ENCODE measurements at regions of chr14 and their contacts with region 1.

Region 1: GRCh38 chr14:102694530-102695166 is 82.6 kb upstream of the TRAF3 start:
- DNase-seq: peak; percentile 43
- ATAC-seq: peak; percentile 87
- H3K4me3 ChIP-seq: no peak overlapping the region
- H3K27ac ChIP-seq: no peak overlapping the region; the same call in 1 of the 2 replicates
- H3K4me1 ChIP-seq: peaks cover 15% of the 10 kb centered on the region
- H3K27me3 ChIP-seq: no peaks in the 10 kb centered on the region
- CTCF ChIP-seq: peak; percentile 50 to 71 (median 64); a peak in 5 of 6 replicates
- EP300 ChIP-seq: no peak
- POLR2A ChIP-seq: no peak
- RAD21 ChIP-seq: peak; percentile 85

Region 2: DNA sequence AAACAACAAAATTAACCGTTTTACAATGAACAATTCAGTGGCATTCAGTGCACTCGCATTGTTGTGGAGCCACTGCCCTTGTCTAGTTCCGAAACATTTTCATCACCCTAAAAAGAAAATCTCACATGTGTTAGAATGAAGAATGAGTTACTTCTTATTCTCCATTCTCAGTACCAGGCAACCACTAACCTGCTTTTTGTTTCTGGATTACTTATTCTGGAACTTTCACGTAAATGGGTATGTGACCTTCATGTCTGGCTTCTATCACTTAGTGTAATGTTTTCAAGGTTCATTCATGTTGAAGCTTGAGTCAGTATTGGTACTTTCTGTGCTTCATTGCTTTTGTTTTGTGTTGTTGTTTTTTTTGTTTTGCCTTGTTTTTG is 86.6 kb before region 1 on chr14:
- CTCF ChIA-PET with region 1: interaction called, 29 read pairs
- POLR2A ChIA-PET with region 1: interaction called, 5 read pairs
- RAD21 ChIA-PET with region 1: interaction called, 13 read pairs
- SMC1A ChIA-PET with region 1: interaction called, 10 read pairs
- in situ Hi-C with region 1: no loop called
- intact Hi-C with region 1: no loop called
- DNase-seq: peak; percentile 79
- ATAC-seq: peak; percentile 82
- H3K4me3 ChIP-seq: peak overlapping the region; percentile 46; the same call in 1 of the 2 replicates
- H3K27ac ChIP-seq: peak overlapping the region; percentile 28
- H3K4me1 ChIP-seq: peaks cover 63% of the 10 kb centered on the region
- H3K27me3 ChIP-seq: no peaks in the 10 kb centered on the region
- CTCF ChIP-seq: no peak
- EP300 ChIP-seq: 0 out of 4 replicates have a peak, but pooled peaks of 1 of the 2 experiments have one; percentile 17
- POLR2A ChIP-seq: no peak
- RAD21 ChIP-seq: no peak

Region 3: DNA sequence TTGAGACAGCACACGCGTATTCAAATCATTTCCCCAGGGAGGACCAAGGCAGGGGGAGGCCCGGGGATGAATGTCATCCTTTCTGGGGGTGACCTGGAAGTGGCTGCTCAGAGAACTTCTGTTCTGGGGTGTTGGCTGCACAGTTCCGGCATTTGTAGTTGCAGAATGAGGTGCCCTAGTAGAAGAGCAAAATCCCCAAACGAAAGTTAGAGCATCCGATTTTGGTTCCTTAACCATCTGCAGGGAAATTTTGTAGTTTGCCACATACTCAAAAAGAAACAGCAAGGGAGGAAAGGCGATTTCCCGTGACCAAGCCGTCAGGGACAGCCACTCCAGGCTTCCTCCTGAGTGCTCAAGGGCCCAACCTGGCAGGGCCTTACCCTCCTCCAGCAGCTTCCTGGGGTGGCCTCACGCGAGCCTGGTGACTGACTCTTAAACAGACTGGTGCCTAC is 69.6 kb after region 1 on chr14:
- CTCF ChIA-PET with region 1: interaction called, 47 read pairs
- POLR2A ChIA-PET with region 1: interaction called, 8 read pairs
- RAD21 ChIA-PET with region 1: interaction called, 42 read pairs
- SMC1A ChIA-PET with region 1: interaction called, 29 read pairs
- in situ Hi-C with region 1: no loop called
- intact Hi-C with region 1: no loop called
- DNase-seq: peak; percentile 97
- ATAC-seq: peak; percentile 76
- H3K4me3 ChIP-seq: no peak overlapping the region
- H3K27ac ChIP-seq: peak overlapping the region; percentile 92
- H3K4me1 ChIP-seq: peaks cover 51% of the 10 kb centered on the region
- H3K27me3 ChIP-seq: no peaks in the 10 kb centered on the region
- CTCF ChIP-seq: no peak
- EP300 ChIP-seq: peak; percentile 51 to 73; a peak in 2 of 4 replicates
- POLR2A ChIP-seq: no peak
- RAD21 ChIP-seq: no peak

Region 4: GRCh38 chr14:102795060-102795925 is 100.6 kb after region 1 on chr14:
- CTCF ChIA-PET with region 1: interaction called, 14 read pairs
- POLR2A ChIA-PET with region 1: interaction called, 5 read pairs
- RAD21 ChIA-PET with region 1: interaction called, 6 read pairs
- SMC1A ChIA-PET with region 1: interaction called, 8 read pairs
- in situ Hi-C with region 1: no loop called
- intact Hi-C with region 1: no loop called
- DNase-seq: no peak
- ATAC-seq: peak; percentile 66
- H3K4me3 ChIP-seq: no peak overlapping the region
- H3K27ac ChIP-seq: peak overlapping the region; percentile 42
- H3K4me1 ChIP-seq: peaks cover 57% of the 10 kb centered on the region
- H3K27me3 ChIP-seq: no peaks in the 10 kb centered on the region
- CTCF ChIP-seq: no peak
- EP300 ChIP-seq: 0 out of 4 replicates have a peak, but pooled peaks of 1 of the 2 experiments have one; percentile 10
- POLR2A ChIP-seq: no peak
- RAD21 ChIP-seq: no peak

Region 5: DNA sequence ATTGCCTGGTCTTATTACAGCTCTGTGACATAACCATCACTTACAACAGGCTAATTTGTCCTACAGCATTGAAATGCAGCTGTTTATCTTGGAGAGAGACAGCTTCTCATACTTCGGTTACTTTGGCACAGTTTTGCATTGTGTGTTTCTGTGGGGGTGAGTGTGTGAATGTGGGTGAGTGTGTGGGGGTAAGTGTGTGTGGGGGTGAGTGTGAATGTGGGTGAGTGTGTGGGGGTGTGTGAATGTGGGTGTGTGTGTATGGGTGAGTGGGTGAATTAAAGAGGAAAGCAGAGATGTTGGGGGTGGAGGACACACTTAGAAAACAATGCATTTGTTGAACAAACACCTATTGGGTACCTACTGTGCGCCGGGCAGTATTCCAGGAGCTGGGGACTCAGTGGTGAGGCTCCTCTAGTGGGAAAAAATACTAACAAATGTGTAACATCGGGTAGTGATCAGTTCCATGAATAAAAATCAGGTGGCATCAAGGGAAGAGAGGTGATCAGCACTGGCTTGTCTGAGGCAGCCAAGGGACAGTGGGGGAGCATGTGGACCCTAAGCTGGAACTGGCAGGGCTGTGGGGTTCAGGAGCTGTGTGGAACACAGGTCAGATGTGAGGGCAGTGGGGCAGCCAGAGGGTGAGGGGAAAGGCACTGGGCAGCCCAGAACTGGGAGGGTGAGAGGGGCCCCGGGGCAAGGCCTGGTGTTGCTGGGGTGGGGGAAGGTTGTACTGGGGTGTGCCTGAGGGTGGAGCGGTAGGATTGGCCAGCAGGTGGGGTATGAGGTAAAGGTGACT is 183.7 kb after region 1 on chr14:
- CTCF ChIA-PET with region 1: interaction called, 22 read pairs
- POLR2A ChIA-PET with region 1: no interaction called
- RAD21 ChIA-PET with region 1: interaction called, 3 read pairs
- SMC1A ChIA-PET with region 1: interaction called, 7 read pairs
- in situ Hi-C with region 1: no loop called
- intact Hi-C with region 1: no loop called
- DNase-seq: no peak
- ATAC-seq: peak; percentile 74
- H3K4me3 ChIP-seq: no peak overlapping the region
- H3K27ac ChIP-seq: no peak overlapping the region
- H3K4me1 ChIP-seq: no peaks in the 10 kb centered on the region
- H3K27me3 ChIP-seq: no peaks in the 10 kb centered on the region
- CTCF ChIP-seq: peak; percentile 6 to 19 (median 14); a peak in 3 of 6 replicates
- EP300 ChIP-seq: no peak
- POLR2A ChIP-seq: peak; percentile 64
- RAD21 ChIP-seq: no peak

Region 6: DNA sequence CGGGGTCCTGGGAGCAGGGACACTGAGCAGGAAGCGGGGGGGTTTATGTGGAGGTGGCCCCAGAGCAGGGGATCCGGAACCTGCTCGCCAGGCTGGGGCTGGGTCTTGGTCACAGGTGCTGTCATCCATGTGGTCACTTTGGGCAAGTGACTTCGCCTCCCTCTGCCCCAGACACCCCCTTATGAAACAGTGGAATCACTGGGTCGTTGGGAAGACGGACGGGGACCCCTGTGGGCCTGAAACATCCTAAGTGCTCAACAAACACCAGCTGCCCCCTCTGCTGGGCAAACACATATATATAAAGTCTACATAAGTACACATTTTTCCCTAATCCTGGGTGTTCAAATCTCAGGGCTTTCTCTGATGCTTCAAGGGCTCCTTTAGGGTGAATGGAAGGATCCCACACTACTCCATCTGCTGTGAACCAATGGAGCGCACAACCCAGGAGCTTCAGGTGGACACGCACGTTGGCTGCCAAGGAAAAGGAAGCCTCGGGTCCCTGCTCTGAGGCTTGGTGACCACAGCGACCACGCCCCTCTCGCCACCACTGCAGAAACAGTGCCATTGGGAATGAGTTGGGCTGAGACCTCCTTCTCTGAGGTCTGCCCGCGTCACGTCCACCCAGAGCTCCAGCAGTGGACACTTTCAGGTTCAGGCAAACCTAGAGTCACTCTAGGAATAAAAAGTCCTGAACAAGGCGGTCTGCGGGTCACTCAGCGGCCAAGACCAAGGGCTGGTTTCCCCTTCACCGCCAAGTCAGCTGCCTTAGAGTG is 308.1 kb after region 1 on chr14:
- CTCF ChIA-PET with region 1: interaction called, 13 read pairs
- POLR2A ChIA-PET with region 1: no interaction called
- RAD21 ChIA-PET with region 1: interaction called, 4 read pairs
- SMC1A ChIA-PET with region 1: interaction called, 3 read pairs
- in situ Hi-C with region 1: no loop called
- intact Hi-C with region 1: no loop called
- DNase-seq: no peak
- ATAC-seq: no peak
- H3K4me3 ChIP-seq: no peak overlapping the region
- H3K27ac ChIP-seq: no peak overlapping the region
- H3K4me1 ChIP-seq: peaks cover 10% of the 10 kb centered on the region
- H3K27me3 ChIP-seq: no peaks in the 10 kb centered on the region
- CTCF ChIP-seq: peak in 1 of 3 experiments; percentile 4; a peak in 1 of 6 replicates
- EP300 ChIP-seq: no peak
- POLR2A ChIP-seq: no peak
- RAD21 ChIP-seq: 0 out of 2 replicates have a peak, but pooled peaks have one; percentile 4

Region 7: GRCh38 chr14:103023881-103024473 is 329.3 kb after region 1 on chr14:
- CTCF ChIA-PET with region 1: no interaction called
- POLR2A ChIA-PET with region 1: no interaction called
- RAD21 ChIA-PET with region 1: no interaction called
- SMC1A ChIA-PET with region 1: no interaction called
- in situ Hi-C with region 1: no loop called
- intact Hi-C with region 1: no loop called
- DNase-seq: no peak
- ATAC-seq: no peak
- H3K4me3 ChIP-seq: no peak overlapping the region
- H3K27ac ChIP-seq: no peak overlapping the region
- H3K4me1 ChIP-seq: 0 out of 2 replicates have a peak, but pooled peaks cover 3% of the 10 kb centered on the region
- H3K27me3 ChIP-seq: no peaks in the 10 kb centered on the region
- CTCF ChIP-seq: no peak
- EP300 ChIP-seq: no peak
- POLR2A ChIP-seq: no peak
- RAD21 ChIP-seq: no peak

Region 8: DNA sequence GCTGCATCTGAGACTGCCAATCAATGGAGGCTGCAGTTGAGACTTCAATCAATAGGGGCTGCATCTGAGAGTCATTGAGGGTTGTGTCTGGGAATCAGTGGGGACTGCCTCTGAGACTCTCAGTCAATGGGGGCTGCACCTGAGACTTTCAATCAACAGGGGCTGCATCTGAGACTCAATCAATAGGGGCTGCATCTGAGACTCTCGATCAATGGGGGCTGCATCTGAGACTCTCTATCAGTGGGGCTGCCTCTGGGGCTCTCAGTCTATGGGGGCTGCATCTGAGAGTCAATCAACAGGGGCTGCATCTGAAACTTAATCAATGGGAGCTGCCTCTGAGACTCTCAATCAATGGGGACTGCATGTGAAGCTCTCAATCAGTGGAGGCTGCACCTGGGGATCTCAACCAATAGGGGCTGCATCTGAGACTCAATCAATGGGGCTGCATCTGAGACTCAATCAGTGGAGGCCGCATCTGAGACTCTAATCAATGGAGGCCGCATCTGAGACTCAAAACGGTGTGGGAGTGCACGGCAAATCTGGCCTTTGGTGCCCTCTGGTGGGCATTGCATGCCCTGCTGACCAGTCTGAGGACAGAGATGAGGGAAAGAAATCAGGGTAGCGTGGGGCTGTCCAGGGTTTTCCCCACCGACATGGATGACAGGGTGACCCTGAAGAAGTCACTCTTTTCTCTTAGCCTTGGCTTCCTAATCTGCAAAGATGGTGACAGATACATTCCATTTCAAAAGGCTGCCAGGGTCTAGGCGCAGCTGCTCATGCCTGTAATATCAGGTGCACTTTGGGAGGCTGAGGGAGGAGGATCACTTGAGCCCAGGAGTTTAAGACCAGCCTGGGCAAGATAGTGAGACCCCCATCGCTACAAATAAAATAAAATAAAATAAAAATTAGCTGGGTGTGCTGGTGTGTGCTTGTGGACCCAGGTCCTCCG is 598.1 kb after region 1 on chr14:
- CTCF ChIA-PET with region 1: interaction called, 4 read pairs
- POLR2A ChIA-PET with region 1: no interaction called
- RAD21 ChIA-PET with region 1: interaction called, 3 read pairs
- SMC1A ChIA-PET with region 1: no interaction called
- in situ Hi-C with region 1: no loop called
- intact Hi-C with region 1: loop called (anchors 10 kb)
- DNase-seq: peak; percentile 52
- ATAC-seq: peak; percentile 99
- H3K4me3 ChIP-seq: no peak overlapping the region
- H3K27ac ChIP-seq: no peak overlapping the region
- H3K4me1 ChIP-seq: no peaks in the 10 kb centered on the region
- H3K27me3 ChIP-seq: no peaks in the 10 kb centered on the region
- CTCF ChIP-seq: peak; percentile 94 to 98 (median 96)
- EP300 ChIP-seq: no peak
- POLR2A ChIP-seq: no peak
- RAD21 ChIP-seq: peak; percentile 95